ENCODE measurements at regions of chr13 and their contacts with region 1.

Region 1: DNA sequence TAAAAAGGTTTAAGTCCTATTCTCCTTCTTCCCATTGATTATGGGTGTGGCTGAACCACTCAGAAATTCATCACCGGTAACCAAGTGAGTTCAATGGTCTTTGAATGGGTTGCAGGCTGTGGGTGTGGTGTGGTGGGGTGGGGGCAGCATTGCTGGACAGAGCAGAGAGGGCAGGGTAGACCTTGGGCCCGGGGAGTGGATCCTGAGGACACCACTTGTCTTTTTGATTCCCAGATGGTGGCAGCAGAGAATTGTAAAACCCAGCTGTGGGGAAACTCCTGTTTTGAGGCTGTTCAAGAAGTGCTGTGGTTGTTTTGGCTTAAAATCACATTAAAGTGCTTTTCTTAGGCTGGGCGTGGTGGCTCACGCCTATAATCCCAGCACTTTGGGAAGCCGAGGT is 45.8 kb upstream of the RGCC start:
- DNase-seq: peak in 4 of 10 donors; percentile 23 to 83 (median 37)

Region 2: DNA sequence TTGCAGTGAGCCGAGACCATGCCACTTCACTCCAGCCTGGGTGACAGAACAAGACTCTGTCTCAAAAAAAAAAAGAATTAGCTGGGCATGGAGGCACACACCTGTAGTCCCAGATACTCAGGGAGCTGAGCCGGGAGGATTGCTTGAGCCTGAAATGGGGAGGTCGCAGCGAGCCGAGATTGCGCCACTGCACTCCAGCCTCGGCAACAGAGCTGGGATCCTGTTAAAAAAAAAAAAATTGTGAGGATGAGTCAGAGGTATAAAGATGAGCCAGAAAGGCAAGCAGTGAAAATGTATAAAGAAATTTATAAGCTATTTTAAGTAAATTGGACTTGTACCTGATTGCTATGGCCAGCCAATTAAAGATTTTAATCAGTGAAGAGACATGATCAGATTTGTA is 300.1 kb before region 1 on chr13:
- intact Hi-C with region 1: no loop called
- DNase-seq: no peak

Region 3: GRCh38 chr13:41652727-41653361 is 241.3 kb after region 1 on chr13:
- intact Hi-C with region 1: loop called (anchors 1 kb)
- DNase-seq: peak in 1 of 10 donors; percentile 50

Region 4: GRCh38 chr13:42102961-42103865 is 691.7 kb after region 1 on chr13:
- intact Hi-C with region 1: loop called (anchors 10 kb)
- DNase-seq: no peak